H1 (cell line): ENCODE measurements at regions of chr11 and their contacts with region 1.

Region 1: GRCh38 chr11:61917341-61918109 is at the start of gene RAB3IL1:
- DNase-seq: peak in 1 of 2 experiments; percentile 81
- H3K4me3 ChIP-seq: peak within 1 kb of the TSS; percentile 32 to 66 (median 44)
- H3K27ac ChIP-seq: no peak within 1 kb of the TSS
- H3K4me1 ChIP-seq: peaks cover 0 to 13% (median 2%) of the 10 kb centered on the region in 4 experiments; a peak in 3 of 7 replicates
- H3K27me3 ChIP-seq: peaks cover 0 to 28% (median 20%) of the 10 kb centered on the region in 4 experiments; a peak in 6 of 7 replicates
- CTCF ChIP-seq: no peak
- EP300 ChIP-seq: no peak
- POLR2A ChIP-seq: no peak
- RAD21 ChIP-seq: no peak
- total RNA-seq, gene RAB3IL1: 5.7 and 6.8 TPM in 2 replicates

Region 2: GRCh38 chr11:61928606-61929005 is 11.1 kb after region 1 on chr11:
- CTCF ChIA-PET with region 1: interaction called, 11 read pairs
- POLR2A ChIA-PET with region 1: interaction called, 5 read pairs
- DNase-seq: no peak
- H3K4me3 ChIP-seq: no peak overlapping the region
- H3K27ac ChIP-seq: no peak overlapping the region
- H3K4me1 ChIP-seq: peaks cover 0 to 10% (median 7%) of the 10 kb centered on the region in 4 experiments; a peak in 6 of 7 replicates
- H3K27me3 ChIP-seq: no peaks in the 10 kb centered on the region
- CTCF ChIP-seq: no peak
- EP300 ChIP-seq: no peak
- POLR2A ChIP-seq: no peak
- RAD21 ChIP-seq: no peak